ENCODE measurements at regions of chr4 and their contacts with region 1.

Region 1: GRCh38 chr4:77044461-77045150 is 31.2 kb downstream of the CCNI start:
- DNase-seq: peak; percentile 8
- ATAC-seq: peak; percentile 69
- H3K4me3 ChIP-seq: no peak overlapping the region
- H3K27ac ChIP-seq: no peak overlapping the region
- H3K4me1 ChIP-seq: no peaks in the 10 kb centered on the region
- H3K27me3 ChIP-seq: no peaks in the 10 kb centered on the region
- CTCF ChIP-seq: peak; percentile 51 to 71 (median 65)
- EP300 ChIP-seq: no peak
- POLR2A ChIP-seq: no peak
- RAD21 ChIP-seq: peak; percentile 50

Region 2: DNA sequence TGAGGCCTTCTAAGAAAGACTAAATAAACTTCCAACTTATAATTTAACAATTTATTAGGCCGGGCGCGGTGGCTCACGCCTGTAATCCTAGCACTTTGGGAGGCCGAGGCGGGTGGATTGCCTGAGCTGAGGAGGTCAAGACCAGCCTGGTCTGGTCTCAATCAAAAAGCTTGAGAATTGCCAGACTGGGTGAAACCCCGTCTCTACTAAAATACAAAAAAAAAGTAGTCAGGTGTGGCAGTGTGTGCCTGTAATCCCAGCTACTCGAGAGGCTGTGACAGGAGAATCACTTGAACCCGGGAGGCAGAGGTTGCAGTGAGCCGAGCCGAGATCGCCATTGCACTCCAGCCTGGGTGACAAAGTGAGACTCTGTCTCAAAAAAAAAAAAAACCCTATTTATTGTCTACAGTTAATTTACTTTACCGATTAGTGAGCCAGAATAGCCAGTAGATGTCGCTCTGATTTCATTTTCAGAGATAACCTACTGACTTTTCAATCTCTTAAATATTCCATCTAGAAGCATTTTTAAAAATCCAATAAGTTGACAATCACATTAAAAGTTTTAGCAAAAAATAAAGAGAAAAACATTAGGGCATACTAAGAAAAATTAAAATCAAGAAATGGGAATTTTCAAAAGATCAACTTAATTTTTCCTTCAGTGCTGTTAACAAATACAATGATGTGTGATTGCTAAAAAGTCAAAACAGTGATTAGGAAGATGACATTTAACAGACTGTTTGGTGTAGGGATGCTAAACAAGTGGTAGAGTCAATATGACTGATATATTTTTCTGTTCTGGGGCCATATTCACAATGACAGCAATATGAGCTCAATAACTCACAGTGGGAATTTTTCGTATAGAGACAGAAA is 613.9 kb before region 1 on chr4:
- CTCF ChIA-PET with region 1: interaction called, 5 read pairs
- POLR2A ChIA-PET with region 1: no interaction called
- RAD21 ChIA-PET with region 1: interaction called, 5 read pairs
- SMC1A ChIA-PET with region 1: no interaction called
- in situ Hi-C with region 1: no loop called
- intact Hi-C with region 1: loop called (anchors 5 kb)
- DNase-seq: no peak
- ATAC-seq: peak; percentile 77
- H3K4me3 ChIP-seq: no peak overlapping the region
- H3K27ac ChIP-seq: no peak overlapping the region
- H3K4me1 ChIP-seq: no peaks in the 10 kb centered on the region
- H3K27me3 ChIP-seq: peaks cover 0 to 4% of the 10 kb centered on the region in 2 experiments; a peak in 2 of 4 replicates
- CTCF ChIP-seq: peak; percentile 53 to 54 (median 53)
- EP300 ChIP-seq: no peak
- POLR2A ChIP-seq: no peak
- RAD21 ChIP-seq: peak; percentile 77

Region 3: GRCh38 chr4:76781698-76782595 is 262.7 kb before region 1 on chr4:
- CTCF ChIA-PET with region 1: interaction called, 4 read pairs
- POLR2A ChIA-PET with region 1: interaction called, 10 read pairs
- RAD21 ChIA-PET with region 1: no interaction called
- SMC1A ChIA-PET with region 1: no interaction called
- in situ Hi-C with region 1: no loop called
- intact Hi-C with region 1: no loop called
- DNase-seq: peak; percentile 76
- ATAC-seq: peak; percentile 66
- H3K4me3 ChIP-seq: no peak overlapping the region
- H3K27ac ChIP-seq: peak overlapping the region; percentile 76
- H3K4me1 ChIP-seq: peaks cover 16% of the 10 kb centered on the region
- H3K27me3 ChIP-seq: no peaks in the 10 kb centered on the region; a peak in 1 of 4 replicates
- CTCF ChIP-seq: no peak
- EP300 ChIP-seq: no peak
- POLR2A ChIP-seq: no peak
- RAD21 ChIP-seq: no peak

Region 4: DNA sequence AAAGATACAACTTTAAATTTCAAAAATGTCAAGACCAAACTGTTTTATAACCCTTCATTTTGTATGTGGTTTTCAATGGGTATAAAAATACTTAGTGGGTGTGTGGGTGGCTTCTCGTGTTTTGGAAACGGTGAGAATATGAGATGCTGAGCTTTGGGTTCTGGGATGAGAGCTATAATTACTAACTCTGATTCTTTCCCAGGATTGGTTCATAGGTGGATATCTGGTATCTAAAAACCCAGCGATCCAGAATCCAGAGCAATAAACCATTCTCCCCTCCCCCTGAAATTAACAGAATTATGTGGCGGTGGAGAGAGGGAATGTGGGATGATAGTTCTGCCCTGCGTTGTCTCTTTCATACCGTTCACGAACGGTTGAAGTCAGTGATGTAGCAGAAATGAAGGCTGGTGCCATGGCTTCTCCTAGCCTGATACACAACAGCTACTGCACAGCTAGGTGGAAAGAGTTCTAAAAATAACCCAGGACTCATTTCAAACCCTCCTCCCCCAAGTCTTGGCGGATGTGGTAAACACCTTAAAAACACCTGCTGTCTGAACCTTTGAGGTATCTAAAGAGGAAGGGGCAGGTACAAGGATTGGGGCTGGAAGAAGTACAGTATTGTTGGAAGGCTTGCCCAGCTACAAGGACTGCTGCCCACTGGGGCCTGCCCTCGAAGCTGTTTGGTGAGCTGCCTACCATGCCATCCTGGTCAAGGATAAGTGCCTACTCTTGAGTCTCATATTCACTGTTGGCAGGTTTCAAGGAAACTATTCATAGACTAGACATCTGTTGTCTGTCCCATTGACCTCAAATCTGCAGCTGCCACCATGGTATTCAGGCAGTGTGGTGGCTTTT is 50.6 kb before region 1 on chr4:
- CTCF ChIA-PET with region 1: interaction called, 30 read pairs
- POLR2A ChIA-PET with region 1: interaction called, 6 read pairs
- RAD21 ChIA-PET with region 1: interaction called, 3 read pairs
- SMC1A ChIA-PET with region 1: interaction called, 3 read pairs
- in situ Hi-C with region 1: no loop called
- intact Hi-C with region 1: no loop called
- DNase-seq: peak; percentile 73
- ATAC-seq: peak; percentile 89
- H3K4me3 ChIP-seq: peak overlapping the region; percentile 53
- H3K27ac ChIP-seq: peak overlapping the region; percentile 89
- H3K4me1 ChIP-seq: peaks cover 38% of the 10 kb centered on the region
- H3K27me3 ChIP-seq: no peaks in the 10 kb centered on the region
- CTCF ChIP-seq: no peak
- EP300 ChIP-seq: peak in 1 of 2 experiments; percentile 69; a peak in 3 of 4 replicates
- POLR2A ChIP-seq: peak; percentile 50
- RAD21 ChIP-seq: no peak; the same call in 1 of the 2 replicates

Region 5: GRCh38 chr4:77193511-77194102 is 149.0 kb after region 1 on chr4:
- CTCF ChIA-PET with region 1: interaction called, 258 read pairs
- POLR2A ChIA-PET with region 1: no interaction called
- RAD21 ChIA-PET with region 1: no interaction called
- SMC1A ChIA-PET with region 1: interaction called, 4 read pairs
- in situ Hi-C with region 1: no loop called
- intact Hi-C with region 1: no loop called
- DNase-seq: peak; percentile 69
- ATAC-seq: peak; percentile 96
- H3K4me3 ChIP-seq: peak overlapping the region; percentile 32; the same call in 1 of the 2 replicates
- H3K27ac ChIP-seq: peak overlapping the region; percentile 90
- H3K4me1 ChIP-seq: peaks cover 37% of the 10 kb centered on the region
- H3K27me3 ChIP-seq: no peaks in the 10 kb centered on the region
- CTCF ChIP-seq: no peak
- EP300 ChIP-seq: peak in 1 of 2 experiments; percentile 59; a peak in 1 of 4 replicates
- POLR2A ChIP-seq: peak; percentile 72
- RAD21 ChIP-seq: no peak

Region 6: DNA sequence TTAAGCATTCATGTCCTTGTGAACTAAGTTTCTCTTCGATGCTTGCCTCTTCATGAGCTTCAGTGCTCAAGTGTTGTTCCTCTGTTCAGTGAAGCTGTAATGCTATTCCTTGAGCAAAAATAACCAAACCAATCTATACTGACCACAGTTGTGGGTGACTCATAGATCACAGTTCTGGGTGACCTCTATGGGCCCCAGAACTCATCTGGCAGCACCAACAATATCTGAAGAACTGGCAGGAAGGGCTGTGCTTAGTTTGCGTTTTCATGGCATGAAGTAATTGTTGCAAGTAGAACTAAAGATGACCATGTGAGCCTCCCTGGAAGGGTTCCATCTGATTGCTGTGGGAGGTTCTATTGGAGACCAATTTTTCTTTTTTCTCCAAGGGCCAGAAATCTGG is 218.6 kb after region 1 on chr4:
- CTCF ChIA-PET with region 1: no interaction called
- POLR2A ChIA-PET with region 1: no interaction called
- RAD21 ChIA-PET with region 1: no interaction called
- SMC1A ChIA-PET with region 1: no interaction called
- in situ Hi-C with region 1: no loop called
- intact Hi-C with region 1: no loop called
- DNase-seq: no peak
- ATAC-seq: no peak
- H3K4me3 ChIP-seq: no peak overlapping the region
- H3K27ac ChIP-seq: no peak overlapping the region
- H3K4me1 ChIP-seq: no peaks in the 10 kb centered on the region
- H3K27me3 ChIP-seq: no peaks in the 10 kb centered on the region; a peak in 1 of 4 replicates
- CTCF ChIP-seq: no peak
- EP300 ChIP-seq: no peak
- POLR2A ChIP-seq: no peak
- RAD21 ChIP-seq: no peak